RWPE1 (cell line): ENCODE measurements at regions of chr5 and their contacts with region 1.

Region 1: DNA sequence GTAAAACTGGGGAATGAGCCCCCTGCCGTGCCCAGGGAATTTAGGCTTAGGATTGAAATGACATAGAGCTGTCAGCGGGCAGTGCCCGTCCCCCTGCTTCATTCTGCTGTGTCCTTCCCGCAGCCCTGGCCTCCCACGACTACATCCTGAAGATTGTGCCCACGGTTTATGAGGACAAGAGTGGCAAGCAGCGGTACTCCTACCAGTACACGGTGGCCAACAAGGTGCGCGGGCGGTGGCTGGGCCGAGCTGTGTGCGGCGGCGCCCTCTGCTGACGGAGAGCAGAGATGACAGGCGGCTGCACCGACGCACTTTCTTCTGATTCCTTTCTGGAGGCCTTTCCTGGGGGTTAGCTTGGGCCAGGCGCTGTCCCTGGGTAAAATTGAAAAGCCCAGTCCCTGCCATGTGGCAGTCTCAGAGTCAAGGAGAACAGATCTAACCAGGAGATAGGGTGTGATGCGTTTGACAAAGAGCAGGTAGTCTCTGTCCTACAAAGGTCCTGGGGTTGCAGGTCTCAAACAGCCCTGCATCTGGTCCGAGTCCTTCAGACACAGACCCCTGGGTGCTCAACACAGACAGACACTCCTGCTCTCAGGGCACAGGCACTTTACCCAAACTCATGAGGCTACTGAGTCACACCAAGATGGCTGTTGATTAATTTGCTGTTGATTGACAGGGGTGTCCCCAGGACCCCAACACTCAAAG is 26.8 kb upstream of the RPL26L1 start:
- DNase-seq: peak; percentile 85
- H3K27ac ChIP-seq: peak overlapping the region; percentile 79
- CTCF ChIP-seq: peak; percentile 99

Region 2: GRCh38 chr5:172707285-172708182 is 224.9 kb before region 1 on chr5:
- CTCF ChIA-PET with region 1: interaction called, 138 read pairs
- POLR2A ChIA-PET with region 1: no interaction called
- DNase-seq: peak; percentile 72
- H3K27ac ChIP-seq: no peak overlapping the region
- CTCF ChIP-seq: peak; percentile 86